ENCODE measurements at regions of chrX and their contacts with region 1.

Region 1: DNA sequence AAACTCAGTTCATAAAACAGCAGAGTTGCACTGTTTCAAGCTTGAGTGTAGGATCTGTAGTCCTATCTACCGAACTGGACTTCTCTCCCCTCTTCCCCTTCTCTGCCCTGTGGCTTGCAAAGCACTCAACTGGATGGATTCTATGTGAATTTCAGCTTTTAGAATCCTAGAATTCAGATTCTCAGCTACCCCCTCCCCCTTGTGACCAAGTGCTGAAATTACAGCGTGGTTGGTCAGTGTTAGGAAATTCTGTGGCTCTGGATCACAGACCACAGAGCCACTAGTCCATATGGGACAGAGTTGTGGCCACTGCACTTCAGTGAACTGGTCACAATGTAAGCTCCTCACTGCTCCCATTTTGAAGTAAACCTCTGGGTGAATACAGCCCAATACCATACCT is 64.6 kb upstream of the TRPC5 start:
- DNase-seq: no peak
- ATAC-seq: no peak
- H3K4me3 Mint-ChIP-seq: no peak overlapping the region
- H3K27ac Mint-ChIP-seq: no peak overlapping the region
- H3K4me1 Mint-ChIP-seq: no peaks in the 10 kb centered on the region
- H3K27me3 Mint-ChIP-seq: no peaks in the 10 kb centered on the region

Region 2: GRCh38 chrX:112094729-112095128 is 52.5 kb before region 1 on chrX:
- CTCF ChIA-PET with region 1: no interaction called
- POLR2A ChIA-PET with region 1: no interaction called
- intact Hi-C with region 1: loop called in 1 of 2 experiments (anchors 10 kb)
- DNase-seq: no peak
- ATAC-seq: no peak
- H3K4me3 Mint-ChIP-seq: no peak overlapping the region
- H3K27ac Mint-ChIP-seq: no peak overlapping the region
- H3K4me1 Mint-ChIP-seq: no peaks in the 10 kb centered on the region
- H3K27me3 Mint-ChIP-seq: no peaks in the 10 kb centered on the region

Region 3: GRCh38 chrX:112113460-112113859 is 33.7 kb before region 1 on chrX:
- CTCF ChIA-PET with region 1: no interaction called
- POLR2A ChIA-PET with region 1: no interaction called
- intact Hi-C with region 1: no loop called
- DNase-seq: no peak
- ATAC-seq: no peak
- H3K4me3 Mint-ChIP-seq: no peak overlapping the region
- H3K27ac Mint-ChIP-seq: no peak overlapping the region
- H3K4me1 Mint-ChIP-seq: no peaks in the 10 kb centered on the region
- H3K27me3 Mint-ChIP-seq: no peaks in the 10 kb centered on the region